CD4-positive, alpha-beta T cell (primary cell): ENCODE measurements at regions of chr12 and their contacts with region 1.

Region 1: GRCh38 chr12:124663771-124664366 is 96.5 kb upstream of the NCOR2 start:
- DNase-seq: no peak
- ATAC-seq: no peak
- H3K4me3 ChIP-seq: no peak overlapping the region
- H3K4me3 Mint-ChIP-seq: no peak overlapping the region
- H3K27ac ChIP-seq: no peak overlapping the region
- H3K27ac Mint-ChIP-seq: no peak overlapping the region
- H3K4me1 ChIP-seq: no peaks in the 10 kb centered on the region
- H3K4me1 Mint-ChIP-seq: no peaks in the 10 kb centered on the region
- H3K27me3 ChIP-seq: no peaks in the 10 kb centered on the region
- H3K27me3 Mint-ChIP-seq: no peaks in the 10 kb centered on the region
- CTCF ChIP-seq: no peak

Region 2: GRCh38 chr12:124645530-124646244 is 18.2 kb before region 1 on chr12:
- CTCF ChIA-PET with region 1: no interaction called
- POLR2A ChIA-PET with region 1: no interaction called
- intact Hi-C with region 1: loop called in 1 of 2 experiments (anchors 1 kb)
- DNase-seq: no peak
- ATAC-seq: no peak
- H3K4me3 ChIP-seq: no peak overlapping the region
- H3K4me3 Mint-ChIP-seq: peak overlapping the region; percentile 23
- H3K27ac ChIP-seq: no peak overlapping the region
- H3K27ac Mint-ChIP-seq: no peak overlapping the region
- H3K4me1 ChIP-seq: peaks cover 13% of the 10 kb centered on the region
- H3K4me1 Mint-ChIP-seq: peaks cover 22% of the 10 kb centered on the region
- H3K27me3 ChIP-seq: no peaks in the 10 kb centered on the region
- H3K27me3 Mint-ChIP-seq: no peaks in the 10 kb centered on the region
- CTCF ChIP-seq: no peak